Activated CD4-positive, alpha-beta T cell treated with anti-CD3 and anti-CD28 coated beads for 36 hours (primary cell): ENCODE measurements at regions of chr22 and their contacts with region 1.

Region 1: DNA sequence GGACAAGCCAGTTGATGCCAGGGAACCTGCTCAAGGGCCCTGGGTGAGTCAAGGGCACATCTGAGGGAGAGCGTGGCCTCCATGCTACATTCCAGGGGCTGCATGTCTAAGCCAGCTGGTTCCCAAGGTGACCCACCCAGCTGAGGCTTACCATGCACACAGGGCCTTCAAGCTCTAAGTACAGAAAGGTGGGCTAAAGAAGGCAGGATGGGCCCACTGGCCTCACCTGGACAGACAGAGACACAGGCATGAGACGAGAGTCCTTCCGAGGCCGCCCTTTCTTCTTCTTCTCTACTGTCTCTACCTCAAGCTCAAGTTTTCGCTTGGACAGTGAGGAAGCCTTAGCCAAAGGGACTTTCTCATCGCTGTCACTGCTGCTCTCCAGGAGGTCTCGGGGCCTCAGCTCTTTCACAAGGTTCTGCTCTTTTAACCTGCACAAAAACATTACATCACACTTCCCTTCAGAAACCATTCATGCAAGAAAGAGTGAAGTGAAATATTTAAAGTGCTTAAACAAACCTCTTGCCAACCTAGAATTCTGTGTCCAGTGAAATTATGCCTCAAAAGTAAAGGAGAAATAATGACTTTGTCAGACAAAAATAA is 69.9 kb downstream of the HIRA start:
- DNase-seq: no peak
- ATAC-seq: no peak
- H3K4me3 Mint-ChIP-seq: no peak overlapping the region
- H3K27ac Mint-ChIP-seq: no peak overlapping the region
- H3K4me1 Mint-ChIP-seq: no peaks in the 10 kb centered on the region
- H3K27me3 Mint-ChIP-seq: no peaks in the 10 kb centered on the region

Region 2: DNA sequence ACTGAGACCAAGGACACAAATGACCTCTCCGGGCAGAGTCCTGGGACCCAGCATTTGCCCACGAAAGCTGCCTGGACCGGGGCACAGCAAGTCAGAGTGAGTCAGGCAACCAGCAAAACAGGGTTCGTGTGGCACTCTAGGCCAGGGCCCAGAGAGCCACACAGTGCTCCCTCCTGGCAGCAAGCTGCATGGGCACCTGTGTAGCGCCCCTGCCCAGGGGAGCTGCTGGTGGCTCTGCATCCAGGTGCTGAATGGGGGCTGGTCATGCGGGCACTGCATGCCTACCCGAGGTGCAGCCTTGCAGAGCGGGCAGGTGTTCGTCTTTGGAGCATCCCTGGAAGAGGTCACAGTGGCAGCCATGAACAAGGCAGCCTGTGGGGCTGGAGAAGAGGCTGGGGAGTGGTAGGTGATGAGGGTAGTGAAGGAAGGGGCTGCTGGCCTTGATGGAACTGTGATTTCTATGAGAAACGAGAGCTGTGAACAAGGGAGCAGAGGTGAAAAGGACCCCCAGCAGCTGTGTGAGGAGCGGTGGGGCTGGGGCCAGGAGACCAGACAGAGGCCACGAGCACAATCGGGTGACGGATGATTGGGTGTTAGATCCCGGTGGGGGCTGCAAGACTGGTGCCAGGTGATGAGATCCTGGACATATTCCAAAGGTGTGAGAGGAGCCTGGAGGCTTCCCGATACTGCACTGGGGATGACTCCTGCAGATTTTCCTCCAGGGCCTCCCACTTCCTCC is 302.7 kb before region 1 on chr22:
- CTCF ChIA-PET with region 1: no interaction called
- POLR2A ChIA-PET with region 1: no interaction called
- intact Hi-C with region 1: loop called in 1 of 2 experiments (anchors 10 kb)
- DNase-seq: no peak
- ATAC-seq: no peak
- H3K4me3 Mint-ChIP-seq: no peak overlapping the region
- H3K27ac Mint-ChIP-seq: no peak overlapping the region
- H3K4me1 Mint-ChIP-seq: peaks cover 4% of the 10 kb centered on the region
- H3K27me3 Mint-ChIP-seq: no peaks in the 10 kb centered on the region

Region 3: GRCh38 chr22:19641254-19641982 is 279.8 kb after region 1 on chr22:
- CTCF ChIA-PET with region 1: no interaction called
- POLR2A ChIA-PET with region 1: no interaction called
- intact Hi-C with region 1: loop called in 1 of 2 experiments (anchors 10 kb)
- DNase-seq: no peak
- ATAC-seq: no peak
- H3K4me3 Mint-ChIP-seq: no peak overlapping the region
- H3K27ac Mint-ChIP-seq: no peak overlapping the region
- H3K4me1 Mint-ChIP-seq: no peaks in the 10 kb centered on the region
- H3K27me3 Mint-ChIP-seq: peaks cover 7% of the 10 kb centered on the region